Activated naive CD4-positive, alpha-beta T cell treated with anti-CD3 and anti-CD28 coated beads for 36 hours (primary cell): ENCODE measurements at regions of chr1 and their contacts with region 1.

Region 1: GRCh38 chr1:19715334-19716203 is 50.9 kb downstream of the HTR6 start:
- DNase-seq: peak; percentile 94
- H3K4me3 Mint-ChIP-seq: no peak overlapping the region
- H3K27ac Mint-ChIP-seq: no peak overlapping the region
- H3K4me1 Mint-ChIP-seq: peaks cover 30% of the 10 kb centered on the region
- H3K27me3 Mint-ChIP-seq: no peaks in the 10 kb centered on the region

Region 2: DNA sequence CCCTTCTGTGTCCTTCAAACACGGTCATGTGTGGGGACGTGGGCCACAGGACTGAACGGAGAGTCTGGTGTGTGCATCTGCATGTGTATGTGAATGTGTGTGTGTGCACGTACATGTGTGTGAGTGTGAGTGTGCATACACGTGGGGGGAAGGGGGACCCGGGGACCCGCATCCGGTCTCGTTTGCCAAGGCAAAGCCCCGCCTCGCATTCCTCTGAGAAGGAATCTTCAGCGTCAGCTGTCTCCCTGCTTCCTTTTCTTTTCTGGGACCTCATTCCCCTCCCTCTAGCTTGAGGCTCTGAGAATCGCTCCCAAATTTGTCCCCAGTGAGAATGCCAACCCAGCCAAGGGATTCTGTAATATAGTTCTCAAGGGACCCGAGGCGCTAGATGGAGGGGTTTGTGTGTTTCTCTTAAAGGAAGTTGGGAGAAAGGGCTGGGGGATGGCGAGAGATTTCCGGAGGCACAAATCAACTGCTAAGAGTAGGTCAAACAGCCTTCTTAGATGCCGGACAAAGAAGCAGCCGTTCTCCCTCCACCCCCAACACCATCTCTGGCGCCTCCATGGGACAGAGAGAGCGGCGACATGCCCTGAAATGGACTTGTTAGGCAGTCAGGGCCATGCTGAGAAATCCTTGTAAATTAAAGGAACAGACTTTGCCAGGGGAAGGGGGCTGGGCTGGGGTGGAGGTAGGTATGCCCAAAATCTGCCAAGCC is 765.7 kb before region 1 on chr1:
- CTCF ChIA-PET with region 1: no interaction called
- intact Hi-C with region 1: loop called (anchors 5 kb)
- DNase-seq: peak; percentile 45
- H3K4me3 Mint-ChIP-seq: peak overlapping the region; percentile 75
- H3K27ac Mint-ChIP-seq: peak overlapping the region; percentile 93
- H3K4me1 Mint-ChIP-seq: peaks cover 95% of the 10 kb centered on the region
- H3K27me3 Mint-ChIP-seq: no peaks in the 10 kb centered on the region

Region 3: DNA sequence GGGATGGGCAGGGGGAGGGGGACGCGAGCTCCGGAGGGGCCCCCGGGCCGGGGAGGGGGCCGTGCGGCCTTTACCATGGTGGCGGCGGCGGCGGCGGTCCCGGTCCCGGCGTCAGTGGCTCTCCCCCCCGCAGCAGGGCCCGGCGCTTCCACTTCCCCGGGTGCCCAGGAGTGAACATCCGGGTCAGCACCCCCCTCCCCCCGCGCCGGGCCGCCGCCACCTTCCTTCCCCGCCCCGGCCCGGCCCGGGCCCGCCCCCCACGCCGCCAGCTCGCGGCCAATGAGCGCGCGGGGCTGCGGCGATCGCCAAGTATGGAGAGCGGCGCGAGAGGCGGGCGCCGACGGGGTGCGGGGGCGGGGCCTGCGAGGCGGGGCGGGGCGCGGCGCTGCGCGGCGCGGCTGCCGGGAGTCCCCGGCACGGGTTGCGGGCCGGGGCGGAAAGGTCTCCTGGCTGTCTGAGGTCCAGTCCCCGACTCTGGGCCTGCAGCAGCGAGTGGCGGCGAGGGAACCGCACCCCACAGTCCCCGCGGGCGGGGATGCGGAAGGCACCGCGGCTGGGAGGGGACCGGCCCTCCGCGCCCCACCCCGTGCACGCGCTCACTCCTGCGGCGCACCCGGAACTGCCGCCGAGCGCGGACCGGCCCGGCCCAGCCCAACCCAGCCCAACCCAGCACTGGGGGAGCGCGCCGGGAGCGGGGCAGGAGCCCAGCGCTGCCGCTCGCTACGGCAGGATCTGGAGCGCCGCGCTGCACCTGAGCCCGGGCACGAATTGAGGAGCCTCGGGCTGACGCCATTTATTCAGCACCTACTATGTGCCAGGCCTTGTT is 230.0 kb before region 1 on chr1 and contains the start of gene CAPZB:
- CTCF ChIA-PET with region 1: no interaction called
- intact Hi-C with region 1: loop called (anchors 2 kb)
- DNase-seq: peak; percentile 95
- H3K4me3 Mint-ChIP-seq: peak within 1 kb of the TSS; percentile 96
- H3K27ac Mint-ChIP-seq: peak within 1 kb of the TSS; percentile 97
- H3K4me1 Mint-ChIP-seq: peaks cover 57% of the 10 kb centered on the region
- H3K27me3 Mint-ChIP-seq: no peaks in the 10 kb centered on the region
- total RNA-seq, gene CAPZB: 362 to 381 TPM

Region 4: GRCh38 chr1:19730793-19731192 is 15.2 kb after region 1 on chr1:
- CTCF ChIA-PET with region 1: interaction called, 11 read pairs
- intact Hi-C with region 1: no loop called
- DNase-seq: no peak
- H3K4me3 Mint-ChIP-seq: no peak overlapping the region
- H3K27ac Mint-ChIP-seq: no peak overlapping the region
- H3K4me1 Mint-ChIP-seq: no peaks in the 10 kb centered on the region
- H3K27me3 Mint-ChIP-seq: no peaks in the 10 kb centered on the region

Region 5: DNA sequence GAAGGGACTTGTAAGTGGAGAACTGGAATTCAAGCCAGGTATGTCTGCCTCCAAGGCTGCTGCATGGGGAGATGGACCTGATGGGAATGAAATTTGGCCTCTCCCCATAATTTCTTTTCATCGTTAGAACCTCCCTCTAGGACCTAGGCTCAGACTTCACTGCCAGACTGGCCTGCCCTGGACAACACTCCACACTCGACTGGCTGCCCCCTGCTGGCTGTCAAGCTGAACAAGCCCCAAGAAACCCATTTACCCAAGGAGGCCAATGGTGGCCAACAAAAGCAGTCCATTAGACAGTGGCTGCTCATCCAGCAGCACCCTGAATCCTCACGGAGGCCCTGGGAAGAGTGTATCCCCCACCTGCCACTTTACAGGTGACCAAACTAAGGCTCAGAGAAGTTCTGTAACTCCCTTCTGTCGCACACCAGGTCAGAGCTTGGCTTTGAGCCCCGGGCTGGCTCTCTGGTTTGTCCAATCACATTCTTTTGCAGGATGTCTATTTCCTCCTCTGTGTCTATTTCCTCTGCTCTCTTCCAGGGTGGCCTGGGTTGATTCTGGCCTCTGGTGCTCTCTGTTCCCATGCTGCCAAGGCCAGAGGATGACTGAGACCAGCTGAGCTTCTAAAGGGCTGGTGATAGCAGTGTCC is 95.8 kb after region 1 on chr1:
- CTCF ChIA-PET with region 1: interaction called, 3 read pairs
- intact Hi-C with region 1: loop called (anchors 1 kb)
- DNase-seq: peak; percentile 74
- H3K4me3 Mint-ChIP-seq: no peak overlapping the region
- H3K27ac Mint-ChIP-seq: no peak overlapping the region
- H3K4me1 Mint-ChIP-seq: no peaks in the 10 kb centered on the region
- H3K27me3 Mint-ChIP-seq: no peaks in the 10 kb centered on the region

Region 6: GRCh38 chr1:20248971-20249612 is 533.5 kb after region 1 on chr1:
- CTCF ChIA-PET with region 1: no interaction called
- intact Hi-C with region 1: loop called (anchors 1 kb)
- DNase-seq: peak; percentile 86
- H3K4me3 Mint-ChIP-seq: peak overlapping the region; percentile 32
- H3K27ac Mint-ChIP-seq: peak overlapping the region; percentile 95
- H3K4me1 Mint-ChIP-seq: peaks cover 25% of the 10 kb centered on the region
- H3K27me3 Mint-ChIP-seq: no peaks in the 10 kb centered on the region